Activated T-helper 2 cell treated with anti-CD3 and anti-CD28 coated beads, Interferon-gamma antibody, Interleukin-2, Interleukin-4, amounts not matched to agents 10 μg/mL and 5 μg/mL and 100 μg/mL, durations not matched to agents 14 hours and 24 hours and 36 hours (primary cell): ENCODE measurements at regions of chr10 and their contacts with region 1.

Region 1: GRCh38 chr10:128180843-128181242 is 54.6 kb upstream of the MKI67 start:
- DNase-seq: peak; percentile 63
- H3K4me3 Mint-ChIP-seq: peak overlapping the region; percentile 66
- H3K27ac Mint-ChIP-seq: peak overlapping the region; percentile 69
- H3K4me1 Mint-ChIP-seq: peaks cover 36% of the 10 kb centered on the region
- H3K27me3 Mint-ChIP-seq: peaks cover 18% of the 10 kb centered on the region

Region 2: GRCh38 chr10:128211953-128212727 is 31.3 kb after region 1 on chr10:
- intact Hi-C with region 1: loop called (anchors 2 kb)
- DNase-seq: peak; percentile 79
- H3K4me3 Mint-ChIP-seq: peak overlapping the region; percentile 85
- H3K27ac Mint-ChIP-seq: peak overlapping the region; percentile 73
- H3K4me1 Mint-ChIP-seq: peaks cover 13% of the 10 kb centered on the region
- H3K27me3 Mint-ChIP-seq: peaks cover 20% of the 10 kb centered on the region

Region 3: GRCh38 chr10:128237710-128238109 is 56.9 kb after region 1 on chr10:
- intact Hi-C with region 1: no loop called
- DNase-seq: no peak
- H3K4me3 Mint-ChIP-seq: no peak overlapping the region
- H3K27ac Mint-ChIP-seq: no peak overlapping the region
- H3K4me1 Mint-ChIP-seq: no peaks in the 10 kb centered on the region
- H3K27me3 Mint-ChIP-seq: no peaks in the 10 kb centered on the region

Region 4: GRCh38 chr10:128429835-128430513 is 249.1 kb after region 1 on chr10:
- intact Hi-C with region 1: no loop called
- DNase-seq: no peak
- H3K4me3 Mint-ChIP-seq: no peak overlapping the region
- H3K27ac Mint-ChIP-seq: no peak overlapping the region
- H3K4me1 Mint-ChIP-seq: no peaks in the 10 kb centered on the region
- H3K27me3 Mint-ChIP-seq: no peaks in the 10 kb centered on the region